Mammary epithelial cell (primary cell): ENCODE measurements at regions of chr11 and their contacts with region 1.

Region 1: DNA sequence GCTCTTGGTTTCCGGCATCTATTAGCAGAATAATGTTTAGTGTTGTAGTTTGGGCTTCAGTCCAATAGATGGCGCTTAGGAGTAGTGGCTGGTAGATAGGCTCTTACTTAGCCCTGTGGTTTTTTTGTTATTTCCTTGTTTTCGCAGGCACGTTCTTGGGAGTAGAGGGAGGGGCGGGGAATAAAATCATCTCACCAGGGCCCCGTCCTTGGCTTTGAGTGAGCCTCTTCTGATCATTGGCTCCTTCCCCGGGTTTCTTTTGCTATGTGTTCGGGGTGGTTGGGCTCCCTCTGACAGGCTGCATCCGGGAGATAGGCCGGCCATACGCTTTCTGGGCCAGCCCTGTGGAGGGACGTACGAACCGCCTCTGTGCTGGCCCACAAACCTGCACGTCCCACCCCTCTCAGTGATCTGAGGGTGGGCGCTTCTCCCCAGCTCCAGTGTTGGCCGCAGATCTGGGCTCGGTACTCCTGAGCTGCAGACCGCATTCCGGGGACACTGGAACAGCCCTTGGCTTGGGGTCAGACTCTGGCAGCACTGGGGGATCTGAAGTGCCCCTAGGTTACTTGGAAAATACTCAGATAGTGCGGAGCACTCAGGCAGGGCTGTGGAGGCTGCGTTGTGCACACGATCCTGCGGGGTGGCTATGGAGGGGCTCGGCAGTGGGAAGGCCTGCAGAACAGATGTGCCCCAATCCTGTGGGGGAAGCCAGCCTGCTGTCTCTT is 217.0 kb downstream of the DYNC2H1 start:
- DNase-seq: peak; percentile 51
- H3K4me3 ChIP-seq: no peak overlapping the region
- H3K27ac ChIP-seq: no peak overlapping the region
- H3K4me1 ChIP-seq: no peaks in the 10 kb centered on the region
- H3K27me3 ChIP-seq: no peaks in the 10 kb centered on the region
- CTCF ChIP-seq: peak; percentile 79 to 89

Region 2: GRCh38 chr11:103433386-103434380 is 107.5 kb after region 1 on chr11:
- CTCF ChIA-PET with region 1: no interaction called
- dilution Hi-C with region 1: no loop called
- in situ Hi-C with region 1: loop called in 1 of 2 experiments (anchors 25 kb)
- intact Hi-C with region 1: no loop called
- DNase-seq: peak; percentile 85
- H3K4me3 ChIP-seq: no peak overlapping the region
- H3K27ac ChIP-seq: peak overlapping the region; percentile 63
- H3K4me1 ChIP-seq: peaks cover 12% of the 10 kb centered on the region
- H3K27me3 ChIP-seq: no peaks in the 10 kb centered on the region
- CTCF ChIP-seq: no peak

Region 3: DNA sequence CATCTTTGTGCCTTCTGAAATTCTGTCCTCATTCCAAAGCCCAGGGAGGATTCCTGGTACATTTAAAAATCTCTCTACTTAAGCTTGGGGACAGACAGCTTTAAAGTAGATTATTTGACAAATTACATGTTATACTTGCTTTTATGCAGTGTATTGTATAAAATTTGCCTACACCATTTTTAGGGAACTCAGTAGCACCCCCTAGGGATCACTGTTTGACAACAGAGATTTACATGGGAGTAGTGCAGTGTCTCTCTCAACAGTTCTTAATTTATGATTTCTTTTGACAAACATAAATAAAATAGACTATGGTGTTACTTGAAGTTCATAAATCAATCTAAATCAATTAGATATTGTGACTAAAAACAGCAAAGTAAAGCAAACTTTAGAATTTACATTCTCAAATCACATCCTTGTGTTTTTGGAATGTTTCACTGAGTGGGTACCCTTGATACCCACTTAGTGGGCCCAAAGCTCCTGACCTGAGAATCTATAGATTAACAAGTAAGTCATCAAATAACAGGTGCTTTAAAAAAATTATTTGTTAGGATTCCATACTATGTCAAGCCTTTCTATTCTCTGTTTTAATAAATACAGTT is 211.8 kb after region 1 on chr11:
- CTCF ChIA-PET with region 1: no interaction called
- dilution Hi-C with region 1: no loop called
- in situ Hi-C with region 1: no loop called
- intact Hi-C with region 1: loop called (anchors 1 kb)
- DNase-seq: peak; percentile 26
- H3K4me3 ChIP-seq: no peak overlapping the region
- H3K27ac ChIP-seq: no peak overlapping the region
- H3K4me1 ChIP-seq: peaks cover 21% of the 10 kb centered on the region
- H3K27me3 ChIP-seq: no peaks in the 10 kb centered on the region
- CTCF ChIP-seq: peak; percentile 60 to 76

Region 4: GRCh38 chr11:103594283-103594682 is 268.1 kb after region 1 on chr11:
- CTCF ChIA-PET with region 1: no interaction called
- dilution Hi-C with region 1: no loop called
- in situ Hi-C with region 1: loop called in 1 of 2 experiments (anchors 10 kb)
- intact Hi-C with region 1: no loop called
- DNase-seq: peak; percentile 23
- H3K4me3 ChIP-seq: no peak overlapping the region
- H3K27ac ChIP-seq: no peak overlapping the region
- H3K4me1 ChIP-seq: peaks cover 5% of the 10 kb centered on the region
- H3K27me3 ChIP-seq: no peaks in the 10 kb centered on the region
- CTCF ChIP-seq: no peak